GM18951 (cell line): ENCODE measurements at regions of chr14 and their contacts with region 1.

Region 1: DNA sequence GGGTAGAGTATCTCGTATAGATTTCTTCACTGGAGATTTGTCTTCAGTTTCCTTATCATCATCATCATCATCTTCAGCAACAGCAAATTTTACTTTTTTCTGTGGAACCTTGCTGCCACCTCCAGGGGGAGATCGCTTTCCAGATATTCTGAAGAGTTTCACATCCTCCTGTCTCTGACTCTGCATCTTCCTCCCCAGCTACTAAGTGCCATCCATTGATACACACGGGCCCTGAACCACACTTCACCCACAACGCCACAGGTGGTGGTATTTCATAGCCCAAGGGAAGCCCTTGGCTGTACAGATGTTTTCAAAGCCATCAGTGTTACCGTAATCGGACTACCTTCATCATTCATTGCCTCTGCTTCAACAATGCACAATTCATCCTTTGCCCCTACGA is 82.2 kb downstream of the PPP2R5C start:
- POLR2A ChIP-seq: no peak

Region 2: DNA sequence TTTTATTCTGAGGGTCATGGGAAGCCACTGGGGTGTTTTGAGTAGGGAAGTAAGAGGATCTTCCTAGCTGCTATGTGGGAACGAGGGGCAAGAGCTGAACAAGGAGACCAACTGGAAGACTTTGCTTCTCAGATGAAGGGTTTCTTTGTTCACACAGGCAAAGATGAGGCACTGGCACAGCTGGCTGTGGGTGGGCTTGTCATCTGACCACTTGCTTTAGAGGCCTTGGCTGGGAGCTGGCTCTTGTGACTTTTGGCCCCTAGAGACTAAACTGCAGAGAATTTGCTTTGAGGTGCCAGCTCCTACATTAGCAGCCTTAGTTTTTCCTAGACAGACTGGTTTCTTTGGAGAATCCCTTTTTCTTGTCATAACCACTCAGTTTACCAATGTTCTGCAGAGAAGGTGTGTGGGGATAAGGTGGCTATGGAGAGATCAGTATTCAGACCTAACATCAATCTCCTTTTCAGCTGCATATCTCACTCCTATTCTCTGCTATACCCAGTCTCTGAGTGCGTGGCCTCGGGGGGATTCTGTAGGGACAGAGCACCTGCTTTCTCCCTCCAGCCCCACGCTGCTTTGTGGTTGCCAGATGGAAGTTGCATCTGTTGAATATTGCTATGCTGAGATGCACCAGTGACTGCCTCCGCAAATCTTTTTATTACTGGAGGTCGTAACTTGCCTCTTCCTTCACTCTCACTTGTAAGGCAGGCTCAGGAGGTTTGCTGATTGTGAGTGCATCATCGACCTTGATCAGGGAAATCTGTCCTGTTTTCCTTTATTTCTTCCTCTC is 69.5 kb before region 1 on chr14:
- in situ Hi-C with region 1: loop called (anchors 10 kb)
- POLR2A ChIP-seq: no peak

Region 3: GRCh38 chr14:102096214-102097114 is 252.8 kb after region 1 on chr14:
- in situ Hi-C with region 1: no loop called
- POLR2A ChIP-seq: no peak

Region 4: GRCh38 chr14:102235275-102235897 is 391.7 kb after region 1 on chr14:
- in situ Hi-C with region 1: no loop called
- POLR2A ChIP-seq: no peak